Caco-2 (cell line): ENCODE measurements at regions of chr22 and their contacts with region 1.

Region 1: DNA sequence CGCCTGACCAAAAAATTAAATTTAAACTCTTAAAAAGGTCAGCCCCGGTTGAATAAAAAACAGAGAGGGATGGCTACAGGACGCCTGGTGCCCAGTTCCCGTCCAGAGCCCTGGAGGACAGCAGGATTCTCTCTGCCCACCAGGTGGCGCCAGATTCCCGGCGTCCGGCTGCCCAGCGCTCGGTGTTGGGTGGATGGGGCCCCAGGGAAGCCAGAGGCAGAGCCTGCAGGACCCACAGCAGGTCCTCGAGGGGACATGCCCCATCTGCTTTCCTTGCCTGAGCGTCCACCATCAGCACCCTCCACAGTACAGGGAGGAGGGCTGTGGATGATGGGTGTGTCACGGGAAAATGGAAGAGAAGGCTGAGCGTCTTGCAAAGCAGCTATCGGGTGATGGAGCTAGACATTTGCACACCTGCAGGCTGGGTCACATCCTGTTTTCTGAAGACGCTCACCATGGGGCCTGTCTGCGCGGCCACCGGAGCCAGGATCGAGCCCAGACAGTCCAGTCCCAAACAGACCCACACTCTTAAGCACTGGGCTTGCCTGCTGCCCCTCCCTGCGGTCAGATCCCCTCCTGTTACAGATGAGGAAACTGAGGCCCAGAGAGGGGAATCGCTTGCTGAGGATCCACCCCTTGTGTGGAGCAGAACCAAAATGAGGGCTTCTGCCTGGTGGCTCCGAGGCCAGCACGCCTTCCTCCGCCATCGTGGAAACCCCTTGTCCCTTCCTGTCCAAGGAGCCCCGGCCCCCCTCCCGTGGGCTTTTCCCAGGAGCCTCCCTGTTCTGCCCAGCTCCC is 18.5 kb upstream of the CBX7 start:
- DNase-seq: peak; percentile 77 to 90
- H3K4me3 ChIP-seq: no peak overlapping the region
- H3K4me3 Mint-ChIP-seq: peak overlapping the region; percentile 32
- H3K27ac Mint-ChIP-seq: no peak overlapping the region
- H3K4me1 ChIP-seq: peaks cover 42% of the 10 kb centered on the region
- H3K4me1 Mint-ChIP-seq: peaks cover 43% of the 10 kb centered on the region
- H3K27me3 ChIP-seq: no peaks in the 10 kb centered on the region
- H3K27me3 Mint-ChIP-seq: peaks cover 3% of the 10 kb centered on the region
- CTCF ChIP-seq: peak; percentile 92 to 95

Region 2: DNA sequence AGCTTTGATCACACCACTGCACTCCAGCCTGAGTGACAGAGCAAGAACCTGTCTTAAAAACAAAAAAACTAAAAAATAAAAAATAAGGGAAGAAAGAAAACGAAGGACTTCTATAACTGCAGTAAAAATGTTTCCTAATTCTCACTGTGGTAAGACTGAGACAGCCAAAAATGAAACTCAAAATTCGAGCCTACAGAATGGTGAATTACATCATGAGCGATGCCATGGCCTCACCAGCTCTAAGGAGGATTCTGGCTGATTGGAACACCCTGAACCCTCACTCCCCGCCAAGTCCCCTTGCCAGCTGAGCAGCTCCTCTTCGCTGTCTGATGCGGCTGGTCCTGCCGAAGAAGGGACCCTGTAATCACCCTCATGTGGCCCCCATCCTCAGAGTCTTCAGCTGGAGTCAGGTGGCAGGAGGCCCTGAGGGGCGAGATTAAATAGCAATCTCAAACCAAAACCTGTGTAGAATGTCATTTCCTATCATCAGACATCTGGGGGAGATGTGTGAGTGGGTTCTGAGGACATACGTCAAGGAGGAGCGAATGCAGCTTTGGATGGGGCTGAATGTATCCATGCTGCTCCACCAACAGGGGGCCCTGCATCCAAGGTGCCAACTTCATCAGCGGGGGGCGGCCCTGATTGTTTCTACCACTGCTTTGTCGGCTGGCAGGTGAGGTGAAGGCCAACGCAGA is 44.5 kb after region 1 on chr22:
- CTCF ChIA-PET with region 1: interaction called, 7 read pairs
- POLR2A ChIA-PET with region 1: interaction called, 4 read pairs
- intact Hi-C with region 1: loop called (anchors 1 kb)
- DNase-seq: peak in 1 of 2 experiments; percentile 23
- H3K4me3 ChIP-seq: no peak overlapping the region
- H3K4me3 Mint-ChIP-seq: no peak overlapping the region
- H3K27ac Mint-ChIP-seq: peak overlapping the region; percentile 98
- H3K4me1 ChIP-seq: peaks cover 39% of the 10 kb centered on the region
- H3K4me1 Mint-ChIP-seq: peaks cover 20% of the 10 kb centered on the region
- H3K27me3 ChIP-seq: no peaks in the 10 kb centered on the region
- H3K27me3 Mint-ChIP-seq: no peaks in the 10 kb centered on the region
- CTCF ChIP-seq: peak; percentile 17 to 40

Region 3: GRCh38 chr22:39309881-39310714 is 139.1 kb after region 1 on chr22:
- CTCF ChIA-PET with region 1: interaction called, 14 read pairs
- POLR2A ChIA-PET with region 1: interaction called, 3 read pairs
- intact Hi-C with region 1: loop called (anchors 2 kb)
- DNase-seq: no peak
- H3K4me3 ChIP-seq: no peak overlapping the region
- H3K4me3 Mint-ChIP-seq: no peak overlapping the region
- H3K27ac Mint-ChIP-seq: no peak overlapping the region
- H3K4me1 ChIP-seq: peaks cover 8% of the 10 kb centered on the region; the same call in 1 of the 2 replicates
- H3K4me1 Mint-ChIP-seq: no peaks in the 10 kb centered on the region
- H3K27me3 ChIP-seq: no peaks in the 10 kb centered on the region
- H3K27me3 Mint-ChIP-seq: no peaks in the 10 kb centered on the region
- CTCF ChIP-seq: no peak

Region 4: GRCh38 chr22:39559454-39560105 is 388.6 kb after region 1 on chr22:
- CTCF ChIA-PET with region 1: no interaction called
- POLR2A ChIA-PET with region 1: interaction called, 11 read pairs
- intact Hi-C with region 1: no loop called
- DNase-seq: peak in 1 of 2 experiments; percentile 45
- H3K4me3 ChIP-seq: no peak overlapping the region
- H3K4me3 Mint-ChIP-seq: no peak overlapping the region
- H3K27ac Mint-ChIP-seq: no peak overlapping the region
- H3K4me1 ChIP-seq: no peaks in the 10 kb centered on the region
- H3K4me1 Mint-ChIP-seq: peaks cover 5% of the 10 kb centered on the region
- H3K27me3 ChIP-seq: peaks cover 6% of the 10 kb centered on the region
- H3K27me3 Mint-ChIP-seq: peaks cover 14% of the 10 kb centered on the region
- CTCF ChIP-seq: peak; percentile 56 to 60